Motor neuron (in vitro differentiated cells): ENCODE measurements at regions of chr10 and their contacts with region 1.

Region 1: GRCh38 chr10:92290837-92291615 is at the starts of genes CPEB3 and MARCHF5:
- ATAC-seq: peak; percentile 96 to 99 (median 99)
- H3K4me3 ChIP-seq: peak within 1 kb of the TSS; percentile 58 to 98 (median 73)
- H3K27ac ChIP-seq: peak within 1 kb of the TSS; percentile 59 to 83
- H3K4me1 ChIP-seq: peaks cover 3% of the 10 kb centered on the region in 2 donors
- total RNA-seq, gene CPEB3: 1.2 to 11.8 (median 7.7) TPM
- total RNA-seq, gene MARCHF5: 10.9 to 32.9 (median 17.1) TPM

Region 2: DNA sequence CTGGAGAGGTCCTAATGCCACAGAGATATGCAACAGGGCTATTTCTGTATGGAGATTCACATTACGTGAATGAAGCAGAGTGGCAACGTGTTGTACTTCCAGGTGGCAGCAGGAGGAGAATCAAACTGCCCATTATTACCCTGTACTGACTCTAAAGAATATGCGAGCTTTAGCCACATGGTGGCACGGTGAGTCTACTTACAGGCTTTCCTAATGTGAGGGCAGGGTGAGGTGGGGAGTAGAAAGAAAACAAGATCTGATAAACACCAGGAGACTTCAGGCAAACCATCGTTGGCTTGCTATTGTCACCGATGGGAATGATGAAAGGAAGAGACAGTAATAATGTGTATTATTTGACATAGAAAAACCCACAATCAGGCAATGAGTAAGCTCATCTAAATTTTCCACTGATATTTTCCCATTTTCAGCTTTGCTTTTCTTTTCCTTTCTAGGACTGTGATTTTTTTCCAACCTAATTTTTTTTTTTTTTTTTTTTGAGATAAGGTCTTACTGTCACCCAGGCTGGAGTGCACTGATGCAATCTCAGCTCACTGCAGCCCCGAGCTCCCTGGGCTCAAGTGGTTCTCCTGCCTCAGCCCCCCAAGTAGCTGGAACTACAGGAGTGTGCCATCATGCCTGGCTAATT is 203.2 kb before region 1 on chr10:
- in situ Hi-C with region 1: loop called in 1 of 9 experiments (anchors 25 kb)
- ATAC-seq: peak; percentile 99 to 100 (median 100)
- H3K4me3 ChIP-seq: peak overlapping the region in 2 of 5 donors; percentile 1 to 12
- H3K27ac ChIP-seq: no peak overlapping the region
- H3K4me1 ChIP-seq: no peaks in the 10 kb centered on the region

Region 3: GRCh38 chr10:92105441-92105840 is 185.6 kb before region 1 on chr10:
- in situ Hi-C with region 1: no loop called
- ATAC-seq: no peak
- H3K4me3 ChIP-seq: no peak overlapping the region
- H3K27ac ChIP-seq: no peak overlapping the region
- H3K4me1 ChIP-seq: peaks cover 13 to 15% of the 10 kb centered on the region in 2 donors